Heart right ventricle (tissue), 16 donors: ENCODE measurements at regions of chr7 and their contacts with region 1.

Region 1: DNA sequence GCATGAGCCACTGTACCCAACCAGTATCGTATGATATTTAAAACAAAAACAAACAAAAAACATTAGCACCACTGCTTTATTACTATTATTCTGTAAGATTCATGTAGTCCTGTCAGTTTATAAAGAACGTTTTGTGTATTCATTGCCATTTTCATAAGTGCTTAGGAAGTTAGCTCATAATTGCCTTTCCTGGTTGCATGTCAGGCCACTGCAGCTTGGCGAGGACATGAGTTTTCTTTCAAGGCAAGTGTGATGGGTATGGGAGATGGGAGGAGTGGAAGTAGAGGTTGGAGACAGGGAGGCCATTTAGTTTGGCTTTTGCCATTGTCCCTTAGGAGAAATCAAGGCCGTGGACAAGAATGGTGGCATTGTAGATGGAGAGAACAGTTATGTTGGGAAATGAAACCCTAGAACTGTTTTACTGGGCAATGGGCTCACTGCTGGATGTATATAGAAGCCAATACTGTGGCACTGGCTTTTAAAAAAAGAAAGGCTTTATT is 48.9 kb downstream of the TYW1 start:
- DNase-seq: no peak
- ATAC-seq: no peak
- H3K4me3 ChIP-seq: no peak overlapping the region
- H3K27ac ChIP-seq: no peak overlapping the region
- H3K4me1 ChIP-seq: peaks cover 0 to 16% (median 10%) of the 10 kb centered on the region in 9 donors
- H3K27me3 ChIP-seq: no peaks in the 10 kb centered on the region
- CTCF ChIP-seq: no peak

Region 2: DNA sequence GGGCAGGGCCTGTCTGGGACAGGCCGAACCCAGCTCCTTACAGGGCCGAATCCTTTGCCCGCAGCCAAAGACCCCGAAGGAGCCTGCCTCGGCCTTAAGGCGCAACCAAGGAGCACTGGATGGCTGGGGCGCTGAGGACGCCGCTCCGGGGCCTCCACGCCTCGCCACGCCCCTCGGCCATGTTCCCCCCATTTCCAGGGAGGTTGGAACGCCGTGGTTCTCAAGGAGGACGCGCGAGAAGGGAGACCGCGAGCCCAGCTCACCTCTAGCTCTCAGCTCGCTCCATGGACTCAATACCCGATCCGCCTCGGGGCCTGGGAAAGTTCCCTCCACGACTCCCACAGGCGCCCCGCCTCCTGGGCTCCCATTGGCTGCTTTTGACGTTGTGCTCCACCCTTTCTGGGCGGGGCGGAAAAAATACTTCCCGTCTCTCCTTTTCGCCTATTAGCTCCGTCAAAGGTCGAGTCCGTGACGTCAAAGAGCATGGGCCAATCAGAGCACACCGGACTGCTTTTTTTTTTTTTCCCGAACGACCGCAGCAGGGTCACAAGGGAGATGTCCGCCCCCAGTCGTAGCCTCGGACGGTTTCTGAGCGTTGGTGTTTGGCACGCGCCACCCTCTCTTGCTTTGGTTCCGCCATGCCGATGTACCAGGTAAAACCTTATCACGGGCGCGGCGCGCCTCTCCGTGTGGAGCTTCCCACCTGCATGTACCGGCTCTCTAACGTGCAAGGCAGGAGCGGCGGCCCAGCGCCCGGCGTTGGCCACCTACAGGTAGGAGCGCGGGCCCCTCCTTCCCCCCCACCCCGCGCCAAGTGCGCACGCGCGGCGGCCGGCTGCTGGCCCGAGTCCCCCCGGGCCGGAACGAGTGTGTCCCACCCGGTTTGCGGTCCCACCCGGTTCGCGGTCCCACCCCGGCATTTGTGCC is 256.8 kb after region 1 on chr7:
- intact Hi-C with region 1: loop called in 1 of 10 experiments (anchors 5 kb)
- DNase-seq: peak; percentile 96 to 100
- ATAC-seq: peak; percentile 94 to 98 (median 97)
- H3K4me3 ChIP-seq: peak overlapping the region; percentile 70 to 97 (median 82)
- H3K27ac ChIP-seq: peak overlapping the region; percentile 81 to 98 (median 95)
- H3K4me1 ChIP-seq: peaks cover 0 to 33% (median 13%) of the 10 kb centered on the region in 9 donors
- H3K27me3 ChIP-seq: no peaks in the 10 kb centered on the region
- CTCF ChIP-seq: peak in 7 of 9 donors; percentile 17 to 63 (median 49)